Pancreas (tissue), 10 donors: ENCODE measurements at regions of chr9 and their contacts with region 1.

Region 1: GRCh38 chr9:94065535-94065961 is 18.7 kb upstream of the PTPDC1 start:
- DNase-seq: peak; percentile 41 to 79 (median 65)
- ATAC-seq: peak; percentile 74 to 94 (median 90)
- H3K4me3 ChIP-seq: no peak overlapping the region
- H3K27ac ChIP-seq: no peak overlapping the region
- H3K4me1 ChIP-seq: peaks cover 0 to 7% (median 0%) of the 10 kb centered on the region in 3 donors
- H3K27me3 ChIP-seq: no peaks in the 10 kb centered on the region
- CTCF ChIP-seq: peak; percentile 46 to 82 (median 76)

Region 2: GRCh38 chr9:93978551-93978950 is 87.0 kb before region 1 on chr9:
- intact Hi-C with region 1: no loop called
- DNase-seq: no peak
- ATAC-seq: no peak
- H3K4me3 ChIP-seq: no peak overlapping the region
- H3K27ac ChIP-seq: no peak overlapping the region
- H3K4me1 ChIP-seq: no peaks in the 10 kb centered on the region
- H3K27me3 ChIP-seq: no peaks in the 10 kb centered on the region
- CTCF ChIP-seq: no peak

Region 3: DNA sequence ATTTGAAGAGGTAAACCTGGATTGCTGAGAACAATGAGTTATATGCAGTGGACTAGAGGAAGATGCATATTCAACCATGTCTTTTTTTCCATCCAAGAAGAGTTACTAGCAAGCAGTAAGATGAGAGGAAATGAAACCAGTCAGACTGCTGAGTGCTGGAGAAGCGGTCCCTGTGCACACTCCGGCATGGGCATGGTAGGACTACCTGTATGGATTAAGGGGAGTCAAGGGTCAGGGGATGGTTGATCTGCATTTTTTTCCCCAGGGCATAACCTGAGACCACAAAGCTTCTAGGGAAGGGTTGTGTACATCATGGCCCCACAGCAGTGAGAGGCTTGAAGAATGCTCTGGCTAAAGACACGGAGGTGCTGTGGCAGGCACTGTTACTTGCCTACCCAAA is 117.0 kb after region 1 on chr9:
- intact Hi-C with region 1: no loop called
- DNase-seq: no peak
- ATAC-seq: peak in 1 of 4 donors; percentile 25
- H3K4me3 ChIP-seq: no peak overlapping the region
- H3K27ac ChIP-seq: no peak overlapping the region
- H3K4me1 ChIP-seq: peaks cover 13 to 18% (median 16%) of the 10 kb centered on the region in 3 donors
- H3K27me3 ChIP-seq: no peaks in the 10 kb centered on the region
- CTCF ChIP-seq: no peak

Region 4: GRCh38 chr9:94213511-94214124 is 148.1 kb after region 1 on chr9:
- intact Hi-C with region 1: loop called in 1 of 3 experiments (anchors 5 kb)
- DNase-seq: peak; percentile 56 to 80 (median 68)
- ATAC-seq: peak; percentile 97 to 100 (median 100)
- H3K4me3 ChIP-seq: no peak overlapping the region
- H3K27ac ChIP-seq: no peak overlapping the region
- H3K4me1 ChIP-seq: no peaks in the 10 kb centered on the region
- H3K27me3 ChIP-seq: no peaks in the 10 kb centered on the region
- CTCF ChIP-seq: peak; percentile 68 to 80 (median 70)

Region 5: DNA sequence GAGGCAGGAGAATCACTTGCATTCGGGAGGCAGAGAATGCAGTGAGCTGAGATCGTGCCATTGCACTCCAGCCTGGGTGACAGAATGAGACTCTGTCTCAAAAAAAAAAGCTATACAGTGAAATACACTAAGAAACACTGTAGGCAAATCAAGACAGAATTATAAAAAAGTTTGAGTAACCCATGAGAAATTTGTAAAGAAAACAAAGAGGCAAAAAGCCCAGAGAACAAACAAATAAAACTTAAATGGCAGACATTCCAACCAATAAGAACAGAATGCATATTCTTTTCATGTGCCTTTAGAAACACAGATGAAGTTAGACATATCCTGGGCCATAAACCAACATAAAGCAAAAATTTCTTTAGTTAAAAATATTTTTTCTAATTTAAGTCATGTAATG is 224.1 kb after region 1 on chr9:
- intact Hi-C with region 1: no loop called
- DNase-seq: no peak
- ATAC-seq: no peak
- H3K4me3 ChIP-seq: no peak overlapping the region
- H3K27ac ChIP-seq: no peak overlapping the region
- H3K4me1 ChIP-seq: no peaks in the 10 kb centered on the region
- H3K27me3 ChIP-seq: no peaks in the 10 kb centered on the region
- CTCF ChIP-seq: no peak